CD14-positive monocyte (primary cell): ENCODE measurements at regions of chr12 and their contacts with region 1.

Region 1: GRCh38 chr12:109047081-109047805 is 5.1 kb upstream of the USP30 start:
- DNase-seq: no peak
- H3K4me3 ChIP-seq: no peak overlapping the region
- H3K4me3 Mint-ChIP-seq: no peak overlapping the region
- H3K27ac ChIP-seq: no peak overlapping the region
- H3K27ac Mint-ChIP-seq: no peak overlapping the region
- H3K4me1 ChIP-seq: peaks cover 4 to 6% of the 10 kb centered on the region in 2 donors
- H3K4me1 Mint-ChIP-seq: peaks cover 6% of the 10 kb centered on the region
- H3K27me3 ChIP-seq: no peaks in the 10 kb centered on the region
- H3K27me3 Mint-ChIP-seq: peaks cover 4 to 9% (median 6%) of the 10 kb centered on the region in 3 donors
- CTCF ChIP-seq: no peak

Region 2: DNA sequence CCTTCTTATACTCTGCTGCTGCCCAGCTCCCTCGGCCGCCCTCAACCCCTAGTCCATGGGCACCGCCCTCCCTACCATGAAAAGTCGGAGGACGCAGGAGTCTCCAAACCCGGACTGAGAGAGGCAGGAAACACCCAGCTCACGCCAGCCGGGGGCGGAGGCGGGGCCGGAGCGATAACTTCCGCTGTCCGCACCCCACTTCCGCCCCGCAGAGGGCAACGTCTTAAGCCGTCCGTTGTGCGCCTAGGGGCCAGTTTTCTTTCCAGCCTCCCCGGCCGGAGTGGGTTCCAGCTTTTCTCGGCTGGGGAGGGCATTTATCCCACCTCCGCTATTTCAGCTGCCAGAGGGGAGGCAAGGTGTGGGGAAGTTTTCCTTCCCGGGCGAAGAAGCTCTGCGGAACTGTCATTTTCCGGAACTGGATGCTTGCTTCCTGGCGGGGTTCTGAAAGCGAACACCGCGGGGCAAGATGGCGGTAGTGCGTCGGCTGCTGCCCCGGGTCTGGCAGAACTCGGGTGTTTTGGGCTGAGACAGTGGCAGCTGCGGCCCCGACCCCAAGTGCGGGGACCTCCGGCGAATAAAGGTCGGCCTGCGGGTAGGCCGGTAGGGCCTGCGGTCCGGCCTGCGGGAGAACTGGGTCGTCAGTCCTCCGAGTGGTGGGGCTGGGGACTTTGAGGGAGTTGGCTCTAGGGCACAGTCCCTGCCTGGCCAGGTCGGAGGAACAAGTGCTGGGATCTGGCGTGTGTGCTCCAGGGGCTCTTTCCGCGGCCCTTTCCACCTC is 430.1 kb after region 1 on chr12 and contains the starts of genes KCTD10 and UBE3B:
- intact Hi-C with region 1: loop called in 1 of 2 experiments (anchors 5 kb)
- DNase-seq: peak; percentile 88 to 90 (median 88)
- H3K4me3 ChIP-seq: peak within 1 kb of the TSS; percentile 74 to 95 (median 81)
- H3K4me3 Mint-ChIP-seq: peak within 1 kb of the TSS; percentile 93 to 96
- H3K27ac ChIP-seq: peak within 1 kb of the TSS; percentile 85 to 93
- H3K27ac Mint-ChIP-seq: peak within 1 kb of the TSS; percentile 92 to 100 (median 100)
- H3K4me1 ChIP-seq: peaks cover 20 to 28% of the 10 kb centered on the region in 2 donors
- H3K4me1 Mint-ChIP-seq: peaks cover 24% of the 10 kb centered on the region
- H3K27me3 ChIP-seq: no peaks in the 10 kb centered on the region
- H3K27me3 Mint-ChIP-seq: no peaks in the 10 kb centered on the region
- CTCF ChIP-seq: no peak
- polyA plus RNA-seq, gene KCTD10: 18.1 to 21.0 (median 20.0) TPM
- polyA plus RNA-seq, gene UBE3B: 14.4 to 25.9 (median 18.2) TPM